CD8-positive, alpha-beta T cell (primary cell): ENCODE measurements at regions of chr6 and their contacts with region 1.

Region 1: GRCh38 chr6:146931208-146931607 is 273.0 kb upstream of the STXBP5 start:
- DNase-seq: peak in 2 of 9 experiments; percentile 6 to 17
- ATAC-seq: no peak
- H3K4me3 ChIP-seq: no peak overlapping the region
- H3K4me3 Mint-ChIP-seq: no peak overlapping the region
- H3K27ac ChIP-seq: no peak overlapping the region
- H3K27ac Mint-ChIP-seq: no peak overlapping the region
- H3K4me1 ChIP-seq: no peaks in the 10 kb centered on the region
- H3K4me1 Mint-ChIP-seq: no peaks in the 10 kb centered on the region
- H3K27me3 ChIP-seq: no peaks in the 10 kb centered on the region
- H3K27me3 Mint-ChIP-seq: peaks cover 3% of the 10 kb centered on the region
- CTCF ChIP-seq: no peak

Region 2: DNA sequence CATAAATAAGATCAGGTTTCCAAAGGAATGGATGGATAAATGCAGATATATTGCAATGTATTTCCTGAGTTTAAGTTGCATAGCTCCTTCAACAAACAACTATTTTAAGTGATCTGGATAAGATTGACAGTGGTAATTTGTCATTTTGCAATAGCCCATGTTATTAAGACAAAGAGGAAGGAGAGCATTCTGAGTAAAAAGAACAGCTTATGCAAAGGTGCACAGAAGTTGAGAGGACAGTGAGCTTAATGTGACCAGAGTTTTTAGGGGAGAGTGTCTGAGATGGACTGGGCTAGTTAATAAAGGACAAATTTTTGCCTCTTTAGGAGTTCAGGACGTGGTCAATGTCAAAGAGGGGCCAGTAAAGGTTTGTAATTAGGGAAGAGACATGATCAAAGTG is 1067.8 kb before region 1 on chr6:
- CTCF ChIA-PET with region 1: no interaction called
- POLR2A ChIA-PET with region 1: no interaction called
- intact Hi-C with region 1: no loop called
- DNase-seq: no peak
- ATAC-seq: no peak
- H3K4me3 ChIP-seq: no peak overlapping the region
- H3K4me3 Mint-ChIP-seq: no peak overlapping the region
- H3K27ac ChIP-seq: no peak overlapping the region
- H3K27ac Mint-ChIP-seq: no peak overlapping the region
- H3K4me1 ChIP-seq: peaks cover 22% of the 10 kb centered on the region
- H3K4me1 Mint-ChIP-seq: peaks cover 39% of the 10 kb centered on the region
- H3K27me3 ChIP-seq: no peaks in the 10 kb centered on the region
- H3K27me3 Mint-ChIP-seq: no peaks in the 10 kb centered on the region
- CTCF ChIP-seq: no peak

Region 3: GRCh38 chr6:147055821-147056392 is 124.7 kb after region 1 on chr6:
- CTCF ChIA-PET with region 1: no interaction called
- POLR2A ChIA-PET with region 1: no interaction called
- intact Hi-C with region 1: no loop called
- DNase-seq: no peak
- ATAC-seq: no peak
- H3K4me3 ChIP-seq: no peak overlapping the region
- H3K4me3 Mint-ChIP-seq: no peak overlapping the region
- H3K27ac ChIP-seq: no peak overlapping the region
- H3K27ac Mint-ChIP-seq: no peak overlapping the region
- H3K4me1 ChIP-seq: no peaks in the 10 kb centered on the region
- H3K4me1 Mint-ChIP-seq: peaks cover 2% of the 10 kb centered on the region
- H3K27me3 ChIP-seq: no peaks in the 10 kb centered on the region
- H3K27me3 Mint-ChIP-seq: no peaks in the 10 kb centered on the region
- CTCF ChIP-seq: no peak

Region 4: DNA sequence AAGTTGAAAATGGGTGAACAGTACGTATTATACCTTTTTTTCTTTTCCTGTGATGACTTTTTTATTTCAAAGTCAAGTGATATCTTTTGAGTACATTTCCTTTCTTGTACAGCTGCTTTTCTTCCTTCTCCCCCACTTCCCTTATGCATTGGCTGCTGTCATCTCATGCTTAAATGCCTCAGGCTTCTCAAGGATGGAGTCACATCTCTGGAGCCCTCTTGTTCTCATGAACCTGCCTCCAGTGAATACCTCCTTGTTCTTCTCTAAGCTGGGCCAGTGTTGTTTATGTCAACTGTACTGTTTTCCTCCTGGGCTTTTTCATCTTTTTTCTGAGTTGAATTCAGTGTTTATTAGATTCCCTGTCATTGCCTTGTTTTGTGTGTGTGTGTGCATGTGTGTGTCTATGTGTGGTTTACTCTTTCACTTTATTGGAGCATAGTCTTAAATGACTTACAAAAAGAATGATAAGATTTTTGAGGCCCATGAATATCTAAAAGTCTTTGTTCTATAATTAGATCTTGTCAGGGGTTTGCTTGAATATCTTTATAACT is 296.6 kb after region 1 on chr6:
- CTCF ChIA-PET with region 1: no interaction called
- POLR2A ChIA-PET with region 1: no interaction called
- intact Hi-C with region 1: loop called in 1 of 2 experiments (anchors 5 kb)
- DNase-seq: no peak
- ATAC-seq: no peak
- H3K4me3 ChIP-seq: no peak overlapping the region
- H3K4me3 Mint-ChIP-seq: no peak overlapping the region
- H3K27ac ChIP-seq: no peak overlapping the region
- H3K27ac Mint-ChIP-seq: peak overlapping the region; percentile 7
- H3K4me1 ChIP-seq: peaks cover 11% of the 10 kb centered on the region
- H3K4me1 Mint-ChIP-seq: peaks cover 42% of the 10 kb centered on the region
- H3K27me3 ChIP-seq: no peaks in the 10 kb centered on the region
- H3K27me3 Mint-ChIP-seq: no peaks in the 10 kb centered on the region
- CTCF ChIP-seq: no peak

Region 5: DNA sequence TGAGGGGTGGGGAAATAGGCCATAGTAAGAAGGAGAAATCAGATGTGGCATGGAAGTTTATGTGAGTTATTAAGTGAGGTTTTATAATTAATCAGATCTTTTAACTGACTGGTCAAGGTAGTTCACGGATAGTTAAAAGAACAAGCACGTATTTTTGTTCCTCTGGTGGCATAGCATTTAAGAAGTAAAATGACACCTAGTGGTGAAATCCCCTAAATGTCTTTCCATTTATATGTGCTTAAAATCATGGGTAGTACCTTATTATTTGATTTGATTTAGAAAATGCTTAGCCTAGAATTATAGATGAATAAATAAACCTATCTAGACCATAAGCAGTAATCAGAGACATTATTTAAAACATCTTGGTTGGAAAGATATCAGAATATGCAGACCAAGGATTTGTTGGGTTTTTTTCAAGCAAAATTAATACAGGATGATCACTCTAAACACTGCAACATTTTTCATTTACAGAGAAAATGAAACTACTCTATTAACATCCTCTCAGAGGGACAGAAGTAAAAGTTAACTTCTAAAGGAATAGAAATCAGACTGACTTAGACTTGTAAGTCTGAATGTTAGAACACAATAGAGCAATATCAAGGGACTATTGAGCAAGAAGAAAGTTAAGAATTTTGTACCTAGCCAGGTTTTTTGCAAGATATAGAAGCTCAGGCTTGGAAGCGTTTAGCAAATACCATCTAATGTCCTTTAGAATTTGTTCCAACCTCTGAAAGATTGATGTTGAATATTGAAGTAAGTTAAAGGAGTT is 354.1 kb after region 1 on chr6:
- CTCF ChIA-PET with region 1: no interaction called
- POLR2A ChIA-PET with region 1: no interaction called
- intact Hi-C with region 1: loop called in 1 of 2 experiments (anchors 2 kb)
- DNase-seq: peak in 2 of 9 experiments; percentile 38 to 57
- ATAC-seq: no peak
- H3K4me3 ChIP-seq: no peak overlapping the region
- H3K4me3 Mint-ChIP-seq: no peak overlapping the region
- H3K27ac ChIP-seq: no peak overlapping the region
- H3K27ac Mint-ChIP-seq: peak overlapping the region; percentile 60
- H3K4me1 ChIP-seq: no peaks in the 10 kb centered on the region
- H3K4me1 Mint-ChIP-seq: peaks cover 23% of the 10 kb centered on the region
- H3K27me3 ChIP-seq: no peaks in the 10 kb centered on the region
- H3K27me3 Mint-ChIP-seq: no peaks in the 10 kb centered on the region
- CTCF ChIP-seq: peak; percentile 59